Activated naive CD4-positive, alpha-beta T cell treated with anti-CD3 and anti-CD28 coated beads for 36 hours (primary cell): ENCODE measurements at regions of chr17 and their contacts with region 1.

Region 1: DNA sequence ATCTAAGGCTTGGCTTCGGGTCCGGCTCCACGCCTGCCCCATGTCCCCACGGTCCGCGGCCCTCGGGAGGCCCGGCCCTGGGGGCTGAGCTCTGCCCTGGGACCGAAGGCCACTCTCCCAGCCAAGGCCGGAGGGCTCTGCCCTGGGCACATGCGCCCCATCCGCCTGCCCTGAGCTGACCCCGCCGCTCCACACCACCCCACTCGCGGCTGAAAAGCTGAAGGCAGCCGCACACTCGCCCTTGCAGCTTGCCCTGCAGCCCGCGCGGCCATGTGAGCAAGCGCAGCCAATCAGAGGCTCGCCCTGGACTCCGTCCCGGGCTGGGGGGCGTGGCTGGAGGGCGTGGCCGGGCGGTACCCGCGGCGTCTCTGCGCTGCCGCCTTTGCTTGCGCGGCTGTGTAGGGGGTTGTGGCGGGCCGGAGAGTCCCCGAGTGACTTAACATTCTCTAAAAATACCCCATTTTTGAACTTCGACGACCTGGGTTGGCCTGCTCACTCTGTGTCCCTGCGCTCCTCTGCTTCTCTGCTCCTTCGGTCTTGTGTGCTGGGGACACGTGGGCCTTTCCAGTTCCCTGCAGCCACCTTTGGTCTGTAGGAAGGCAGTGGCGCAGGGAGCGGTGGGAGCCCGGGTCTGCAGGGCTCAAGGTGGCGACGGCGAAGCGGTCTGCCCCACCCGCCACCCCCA is 8.8 kb upstream of the MAP2K3 start:
- DNase-seq: peak; percentile 96
- H3K4me3 Mint-ChIP-seq: peak overlapping the region; percentile 78
- H3K27ac Mint-ChIP-seq: peak overlapping the region; percentile 77
- H3K4me1 Mint-ChIP-seq: peaks cover 42% of the 10 kb centered on the region
- H3K27me3 Mint-ChIP-seq: no peaks in the 10 kb centered on the region

Region 2: GRCh38 chr17:21119247-21119918 is 156.3 kb before region 1 on chr17:
- CTCF ChIA-PET with region 1: interaction called, 6 read pairs
- intact Hi-C with region 1: loop called (anchors 1 kb)
- DNase-seq: peak; percentile 83
- H3K4me3 Mint-ChIP-seq: peak overlapping the region; percentile 16
- H3K27ac Mint-ChIP-seq: no peak overlapping the region
- H3K4me1 Mint-ChIP-seq: peaks cover 6% of the 10 kb centered on the region
- H3K27me3 Mint-ChIP-seq: peaks cover 2% of the 10 kb centered on the region

Region 3: DNA sequence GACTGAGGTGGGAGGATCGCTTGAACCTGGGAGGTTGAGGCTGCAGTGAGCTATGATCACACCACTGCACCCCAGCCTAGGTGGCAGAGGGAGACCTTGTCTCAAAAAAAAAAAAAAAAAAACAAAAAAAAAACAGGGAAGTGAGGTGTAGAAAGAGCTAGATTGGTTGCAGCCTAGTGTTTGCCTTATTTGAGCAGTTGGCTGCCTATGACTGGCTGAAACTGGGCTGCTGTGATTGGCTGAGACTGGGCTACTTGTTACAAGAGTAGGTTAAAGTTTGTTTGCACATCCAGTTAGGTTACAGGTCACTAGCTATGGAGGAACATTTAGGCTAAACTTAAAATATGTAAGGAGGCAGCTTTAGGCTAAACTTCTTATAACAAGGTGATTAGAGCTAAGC is 143.3 kb before region 1 on chr17:
- CTCF ChIA-PET with region 1: no interaction called
- intact Hi-C with region 1: no loop called
- DNase-seq: no peak
- H3K4me3 Mint-ChIP-seq: no peak overlapping the region
- H3K27ac Mint-ChIP-seq: no peak overlapping the region
- H3K4me1 Mint-ChIP-seq: peaks cover 19% of the 10 kb centered on the region
- H3K27me3 Mint-ChIP-seq: no peaks in the 10 kb centered on the region

Region 4: DNA sequence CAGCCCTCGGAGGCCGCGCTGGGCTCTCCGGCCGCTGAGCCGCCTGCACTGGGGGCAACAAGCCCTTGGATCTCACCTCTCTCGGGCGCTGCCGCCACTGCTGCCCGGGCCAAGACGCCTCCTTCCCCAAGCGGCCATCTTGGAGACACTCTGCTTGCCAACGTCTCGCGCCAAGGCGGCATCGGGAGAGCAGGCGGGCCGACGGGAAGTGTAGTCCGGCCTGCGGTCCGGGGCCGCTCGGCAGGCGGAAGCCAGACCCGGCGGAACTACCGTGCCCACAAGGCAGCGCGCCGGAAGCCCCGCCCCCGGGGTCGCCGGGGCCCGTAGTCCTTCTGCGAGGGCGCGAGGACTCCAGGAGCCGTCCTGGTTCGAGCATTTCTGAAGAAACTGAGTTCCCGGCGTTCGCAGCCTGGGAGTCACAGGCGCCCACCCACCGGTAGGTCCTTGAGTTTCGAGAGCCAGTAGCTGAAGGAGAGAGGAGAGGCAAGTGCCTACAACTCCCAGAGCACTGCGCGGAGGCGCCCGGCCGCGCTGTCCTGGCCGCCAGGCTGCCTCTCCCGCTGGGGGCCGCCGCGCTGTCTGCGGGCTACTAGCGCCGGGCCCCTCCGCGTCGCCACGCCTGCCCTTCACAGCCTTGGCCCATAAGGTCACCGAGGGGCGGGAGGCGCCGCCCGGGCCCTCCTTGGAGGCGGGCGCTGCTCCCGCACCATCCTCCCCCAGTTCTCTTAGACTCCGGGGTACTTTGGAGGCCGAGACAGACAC is 61.5 kb before region 1 on chr17 and contains the start of gene TMEM11:
- CTCF ChIA-PET with region 1: interaction called, 3 read pairs
- intact Hi-C with region 1: loop called (anchors 1 kb)
- DNase-seq: peak; percentile 95
- H3K4me3 Mint-ChIP-seq: peak within 1 kb of the TSS; percentile 91
- H3K27ac Mint-ChIP-seq: peak within 1 kb of the TSS; percentile 91
- H3K4me1 Mint-ChIP-seq: peaks cover 65% of the 10 kb centered on the region
- H3K27me3 Mint-ChIP-seq: no peaks in the 10 kb centered on the region
- total RNA-seq, gene TMEM11: 23.6 to 28.2 TPM

Region 5: DNA sequence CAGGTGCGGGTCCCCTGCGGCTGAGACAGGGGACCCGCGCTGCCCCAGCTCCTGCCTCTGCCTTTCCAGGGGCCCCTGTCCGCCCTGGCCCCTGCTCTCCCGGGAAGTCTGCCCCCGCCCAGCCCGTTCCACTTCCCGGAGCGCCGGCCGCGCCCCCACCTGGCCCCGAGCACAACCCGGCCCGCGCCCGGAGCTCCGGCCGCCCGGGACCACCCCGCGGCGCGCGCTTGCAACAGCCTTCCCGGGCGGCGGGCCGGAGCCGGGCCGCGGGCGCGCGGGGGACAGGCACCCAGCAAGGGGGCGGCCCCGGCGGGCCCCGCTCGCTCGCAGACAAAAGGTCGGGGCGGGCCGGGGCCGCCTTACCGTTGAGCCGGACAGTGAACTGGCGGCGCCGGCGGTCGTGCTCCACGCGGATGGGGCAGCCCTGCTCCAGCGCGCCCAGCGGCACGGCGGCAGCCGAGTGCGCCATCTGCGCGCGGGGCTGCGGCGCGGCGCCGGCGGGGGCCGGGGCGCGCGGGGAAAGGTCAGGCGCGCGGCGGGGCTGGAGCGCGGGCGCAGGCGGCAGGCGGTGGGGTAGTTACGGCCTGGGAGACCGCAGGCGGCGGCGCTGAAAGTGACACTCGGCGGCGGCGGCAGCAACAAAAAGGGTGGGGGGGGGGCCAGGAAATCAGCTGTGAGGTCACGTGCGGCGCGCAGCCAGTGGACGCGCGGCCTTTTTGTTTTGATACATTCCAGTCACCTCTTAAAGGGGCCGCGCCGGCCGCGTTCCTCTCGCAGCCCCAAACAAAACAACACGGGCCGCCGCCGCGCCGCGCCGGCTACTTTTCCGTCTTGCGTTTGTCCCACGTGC is 22.7 kb before region 1 on chr17 and contains the start of gene NATD1:
- CTCF ChIA-PET with region 1: interaction called, 6 read pairs
- intact Hi-C with region 1: loop called (anchors 1 kb)
- DNase-seq: peak; percentile 82
- H3K4me3 Mint-ChIP-seq: peak within 1 kb of the TSS; percentile 79
- H3K27ac Mint-ChIP-seq: no peak within 1 kb of the TSS
- H3K4me1 Mint-ChIP-seq: peaks cover 19% of the 10 kb centered on the region
- H3K27me3 Mint-ChIP-seq: no peaks in the 10 kb centered on the region
- total RNA-seq, gene NATD1: 2.1 to 2.5 TPM

Region 6: GRCh38 chr17:21376759-21377690 is 101.3 kb after region 1 on chr17:
- CTCF ChIA-PET with region 1: no interaction called
- intact Hi-C with region 1: loop called (anchors 2 kb)
- DNase-seq: no peak
- H3K4me3 Mint-ChIP-seq: peak overlapping the region; percentile 27
- H3K27ac Mint-ChIP-seq: no peak overlapping the region
- H3K4me1 Mint-ChIP-seq: peaks cover 6% of the 10 kb centered on the region
- H3K27me3 Mint-ChIP-seq: peaks cover 30% of the 10 kb centered on the region

Region 7: GRCh38 chr17:21689604-21690003 is 413.9 kb after region 1 on chr17:
- CTCF ChIA-PET with region 1: no interaction called
- intact Hi-C with region 1: no loop called
- DNase-seq: no peak
- H3K4me3 Mint-ChIP-seq: no peak overlapping the region
- H3K27ac Mint-ChIP-seq: no peak overlapping the region
- H3K4me1 Mint-ChIP-seq: no peaks in the 10 kb centered on the region
- H3K27me3 Mint-ChIP-seq: no peaks in the 10 kb centered on the region